Activated CD4-positive, alpha-beta memory T cell treated with anti-CD3 and anti-CD28 coated beads for 36 hours (primary cell): ENCODE measurements at regions of chr6 and their contacts with region 1.

Region 1: DNA sequence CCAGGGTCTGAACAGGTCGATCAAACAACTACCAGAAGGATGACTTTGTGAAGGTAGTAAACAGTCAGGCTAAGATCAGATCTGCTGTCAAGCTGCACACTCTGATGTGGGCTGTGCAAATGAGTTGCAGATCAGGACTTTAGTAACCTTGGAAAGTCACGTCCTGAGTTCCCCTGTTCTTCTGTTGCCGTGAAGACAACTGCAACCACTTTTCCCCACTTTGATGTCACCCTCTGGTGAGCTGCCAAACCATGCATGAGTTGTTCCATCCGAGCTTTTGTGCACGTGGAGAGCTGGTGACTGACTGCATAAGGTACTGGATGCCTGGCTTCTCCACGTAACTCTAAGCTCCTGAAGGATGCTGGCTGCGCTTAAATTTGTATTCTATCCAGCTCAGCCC is 111.0 kb downstream of the CD83 start:
- DNase-seq: peak; percentile 80
- H3K4me3 Mint-ChIP-seq: no peak overlapping the region
- H3K27ac Mint-ChIP-seq: no peak overlapping the region
- H3K4me1 Mint-ChIP-seq: peaks cover 16% of the 10 kb centered on the region
- H3K27me3 Mint-ChIP-seq: no peaks in the 10 kb centered on the region

Region 2: GRCh38 chr6:14254505-14254904 is 25.9 kb after region 1 on chr6:
- CTCF ChIA-PET with region 1: no interaction called
- POLR2A ChIA-PET with region 1: no interaction called
- intact Hi-C with region 1: no loop called
- DNase-seq: no peak
- H3K4me3 Mint-ChIP-seq: no peak overlapping the region
- H3K27ac Mint-ChIP-seq: no peak overlapping the region
- H3K4me1 Mint-ChIP-seq: no peaks in the 10 kb centered on the region
- H3K27me3 Mint-ChIP-seq: no peaks in the 10 kb centered on the region

Region 3: GRCh38 chr6:14276667-14277404 is 48.3 kb after region 1 on chr6:
- CTCF ChIA-PET with region 1: no interaction called
- POLR2A ChIA-PET with region 1: no interaction called
- intact Hi-C with region 1: loop called (anchors 5 kb)
- DNase-seq: peak; percentile 44
- H3K4me3 Mint-ChIP-seq: no peak overlapping the region
- H3K27ac Mint-ChIP-seq: peak overlapping the region; percentile 85
- H3K4me1 Mint-ChIP-seq: peaks cover 39% of the 10 kb centered on the region
- H3K27me3 Mint-ChIP-seq: no peaks in the 10 kb centered on the region